Naive thymus-derived CD4-positive, alpha-beta T cell (primary cell): ENCODE measurements at regions of chr19 and their contacts with region 1.

Region 1: GRCh38 chr19:35213663-35214632 is 14.6 kb downstream of the FAM187B start:
- DNase-seq: peak; percentile 35 to 97 (median 90)
- ATAC-seq: peak; percentile 49
- H3K4me3 ChIP-seq: peak overlapping the region; percentile 24
- H3K4me3 Mint-ChIP-seq: peak overlapping the region; percentile 31 to 91 (median 71)
- H3K27ac ChIP-seq: peak overlapping the region; percentile 91
- H3K27ac Mint-ChIP-seq: peak overlapping the region; percentile 98 to 100 (median 100)
- H3K4me1 ChIP-seq: peaks cover 47 to 52% of the 10 kb centered on the region in 2 donors
- H3K4me1 Mint-ChIP-seq: peaks cover 41 to 81% (median 70%) of the 10 kb centered on the region in 7 donors
- H3K27me3 ChIP-seq: no peaks in the 10 kb centered on the region
- H3K27me3 Mint-ChIP-seq: no peaks in the 10 kb centered on the region

Region 2: DNA sequence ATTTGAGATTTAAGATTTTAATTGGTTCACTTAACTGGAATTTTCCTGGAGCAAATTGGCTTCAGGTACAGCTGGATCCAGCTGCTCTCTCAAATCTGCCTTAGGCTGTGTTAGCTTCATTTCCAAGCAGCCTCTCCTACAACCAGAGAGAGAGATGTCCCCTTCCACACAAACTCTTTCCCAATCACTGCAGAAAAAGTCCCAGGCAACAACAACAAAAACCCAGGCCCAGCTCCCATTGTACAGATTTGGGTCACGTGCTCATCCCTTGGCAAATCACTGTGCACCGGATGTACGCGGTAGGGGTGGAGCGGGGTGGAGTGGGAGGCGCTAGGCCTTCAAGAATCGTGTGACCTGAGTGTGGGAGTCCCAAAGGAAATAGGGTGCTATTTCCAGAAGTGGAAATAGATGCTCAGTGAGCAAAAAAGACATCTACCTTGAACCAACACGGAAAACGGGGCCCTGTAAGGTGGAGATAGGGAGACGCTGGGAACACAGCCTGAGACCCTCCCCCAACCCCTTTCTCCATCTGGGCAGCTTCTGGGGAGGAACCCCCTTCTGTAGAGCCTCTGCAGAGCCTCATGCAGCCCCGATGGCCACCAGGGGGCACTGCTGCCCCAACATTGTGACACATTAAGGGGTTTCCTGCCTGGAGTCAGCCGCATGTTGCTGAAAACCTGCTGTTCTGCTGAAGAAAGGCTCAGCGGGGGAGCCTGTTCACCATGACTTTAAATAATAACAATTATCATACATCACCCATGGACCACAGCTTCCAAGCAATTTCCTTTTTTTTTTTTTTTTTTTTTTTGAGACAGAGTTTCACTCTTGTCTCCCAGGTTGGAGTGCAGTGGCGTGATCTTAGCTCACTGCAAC is 147.0 kb before region 1 on chr19:
- CTCF ChIA-PET with region 1: interaction called, 8 read pairs
- POLR2A ChIA-PET with region 1: no interaction called
- intact Hi-C with region 1: loop called in 1 of 2 experiments (anchors 1 kb)
- DNase-seq: peak; percentile 74 to 91 (median 87)
- ATAC-seq: peak; percentile 95
- H3K4me3 ChIP-seq: no peak overlapping the region
- H3K4me3 Mint-ChIP-seq: peak overlapping the region in 2 of 10 donors; percentile 3 to 24
- H3K27ac ChIP-seq: no peak overlapping the region
- H3K27ac Mint-ChIP-seq: peak overlapping the region in 6 of 9 donors; percentile 8 to 80 (median 49)
- H3K4me1 ChIP-seq: no peaks in the 10 kb centered on the region
- H3K4me1 Mint-ChIP-seq: peaks cover 0 to 13% (median 7%) of the 10 kb centered on the region in 7 donors
- H3K27me3 ChIP-seq: no peaks in the 10 kb centered on the region
- H3K27me3 Mint-ChIP-seq: no peaks in the 10 kb centered on the region

Region 3: GRCh38 chr19:35154525-35155406 is 59.2 kb before region 1 on chr19 and contains the start of gene FXYD5:
- CTCF ChIA-PET with region 1: interaction called, 9 read pairs
- POLR2A ChIA-PET with region 1: interaction called, 74 read pairs
- intact Hi-C with region 1: loop called (anchors 1 kb)
- DNase-seq: peak; percentile 41 to 81 (median 65)
- ATAC-seq: peak; percentile 82
- H3K4me3 ChIP-seq: peak within 1 kb of the TSS; percentile 93
- H3K4me3 Mint-ChIP-seq: peak within 1 kb of the TSS; percentile 98 to 100 (median 99)
- H3K27ac ChIP-seq: peak within 1 kb of the TSS; percentile 94
- H3K27ac Mint-ChIP-seq: peak within 1 kb of the TSS; percentile 96 to 99 (median 99)
- H3K4me1 ChIP-seq: peaks cover 23 to 32% of the 10 kb centered on the region in 2 donors
- H3K4me1 Mint-ChIP-seq: peaks cover 38 to 60% (median 55%) of the 10 kb centered on the region in 7 donors
- H3K27me3 ChIP-seq: no peaks in the 10 kb centered on the region
- H3K27me3 Mint-ChIP-seq: peaks cover 0 to 5% (median 0%) of the 10 kb centered on the region in 5 donors
- total RNA-seq, gene FXYD5: 362 to 458 (median 387) TPM

Region 4: GRCh38 chr19:35179830-35180229 is 34.1 kb before region 1 on chr19:
- CTCF ChIA-PET with region 1: interaction called, 4 read pairs
- POLR2A ChIA-PET with region 1: interaction called, 13 read pairs
- intact Hi-C with region 1: no loop called
- DNase-seq: peak in 3 of 9 donors; percentile 25 to 29 (median 29)
- ATAC-seq: no peak
- H3K4me3 ChIP-seq: no peak overlapping the region
- H3K4me3 Mint-ChIP-seq: peak overlapping the region in 9 of 10 donors; percentile 22 to 75 (median 58)
- H3K27ac ChIP-seq: no peak overlapping the region
- H3K27ac Mint-ChIP-seq: peak overlapping the region; percentile 17 to 88 (median 53)
- H3K4me1 ChIP-seq: peaks cover 0 to 14% of the 10 kb centered on the region in 2 donors
- H3K4me1 Mint-ChIP-seq: peaks cover 26 to 59% (median 41%) of the 10 kb centered on the region in 7 donors
- H3K27me3 ChIP-seq: no peaks in the 10 kb centered on the region
- H3K27me3 Mint-ChIP-seq: peaks cover 0 to 5% (median 0%) of the 10 kb centered on the region in 5 donors

Region 5: GRCh38 chr19:35236638-35237400 is 22.9 kb after region 1 on chr19:
- CTCF ChIA-PET with region 1: interaction called, 11 read pairs
- POLR2A ChIA-PET with region 1: interaction called, 20 read pairs
- intact Hi-C with region 1: loop called (anchors 1 to 2 kb)
- DNase-seq: peak in 3 of 9 donors; percentile 15 to 35 (median 23)
- ATAC-seq: no peak
- H3K4me3 ChIP-seq: no peak overlapping the region
- H3K4me3 Mint-ChIP-seq: no peak overlapping the region
- H3K27ac ChIP-seq: no peak overlapping the region
- H3K27ac Mint-ChIP-seq: peak overlapping the region in 6 of 9 donors; percentile 11 to 62 (median 26)
- H3K4me1 ChIP-seq: peaks cover 13 to 17% of the 10 kb centered on the region in 2 donors
- H3K4me1 Mint-ChIP-seq: peaks cover 13 to 45% (median 35%) of the 10 kb centered on the region in 7 donors
- H3K27me3 ChIP-seq: no peaks in the 10 kb centered on the region
- H3K27me3 Mint-ChIP-seq: peaks cover 0 to 20% (median 0%) of the 10 kb centered on the region in 5 donors

Region 6: GRCh38 chr19:35748106-35749020 is 534.4 kb after region 1 on chr19 and contains the start of gene LIN37:
- CTCF ChIA-PET with region 1: no interaction called
- POLR2A ChIA-PET with region 1: no interaction called
- intact Hi-C with region 1: loop called in 1 of 2 experiments (anchors 2 kb)
- DNase-seq: peak; percentile 91 to 100 (median 99)
- ATAC-seq: peak; percentile 83
- H3K4me3 ChIP-seq: peak within 1 kb of the TSS; percentile 95
- H3K4me3 Mint-ChIP-seq: peak within 1 kb of the TSS; percentile 90 to 100 (median 98)
- H3K27ac ChIP-seq: peak within 1 kb of the TSS; percentile 85
- H3K27ac Mint-ChIP-seq: peak within 1 kb of the TSS; percentile 89 to 97 (median 95)
- H3K4me1 ChIP-seq: peaks cover 28 to 30% of the 10 kb centered on the region in 2 donors
- H3K4me1 Mint-ChIP-seq: peaks cover 14 to 56% (median 43%) of the 10 kb centered on the region in 7 donors
- H3K27me3 ChIP-seq: no peaks in the 10 kb centered on the region
- H3K27me3 Mint-ChIP-seq: peaks cover 0 to 2% (median 0%) of the 10 kb centered on the region in 5 donors
- total RNA-seq, gene LIN37: 7.9 to 33.1 (median 18.9) TPM